Head of caudate nucleus (tissue), 42 donors: ENCODE measurements at regions of chr2 and their contacts with region 1.

Region 1: DNA sequence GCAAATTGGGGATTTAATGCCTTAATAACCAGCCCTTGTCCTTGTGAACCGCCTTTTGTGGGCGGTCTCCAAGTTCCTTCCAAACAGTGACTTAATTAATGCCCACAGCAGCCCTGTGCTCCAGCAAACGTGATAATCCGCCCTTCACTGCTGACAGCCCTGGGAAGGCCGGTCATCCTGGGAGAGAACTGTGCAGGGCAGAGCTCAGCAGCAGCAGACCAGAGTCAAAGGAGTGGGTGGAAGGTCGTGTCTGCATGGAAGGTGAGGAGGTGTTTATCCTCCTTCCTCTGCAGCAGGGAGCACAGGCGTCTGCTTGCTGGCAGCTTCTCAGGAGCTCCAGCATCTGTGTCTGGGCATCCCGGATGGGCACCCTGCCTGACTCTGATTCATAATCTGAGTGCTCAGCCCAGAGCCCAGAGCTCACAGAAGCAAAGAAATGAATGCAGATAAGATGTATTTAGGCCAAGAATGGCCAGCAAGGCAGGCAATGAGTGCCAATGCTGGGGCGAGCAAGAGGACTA is 270.0 kb upstream of the PXDN start:
- DNase-seq: peak; percentile 66 to 96 (median 86)

Region 2: DNA sequence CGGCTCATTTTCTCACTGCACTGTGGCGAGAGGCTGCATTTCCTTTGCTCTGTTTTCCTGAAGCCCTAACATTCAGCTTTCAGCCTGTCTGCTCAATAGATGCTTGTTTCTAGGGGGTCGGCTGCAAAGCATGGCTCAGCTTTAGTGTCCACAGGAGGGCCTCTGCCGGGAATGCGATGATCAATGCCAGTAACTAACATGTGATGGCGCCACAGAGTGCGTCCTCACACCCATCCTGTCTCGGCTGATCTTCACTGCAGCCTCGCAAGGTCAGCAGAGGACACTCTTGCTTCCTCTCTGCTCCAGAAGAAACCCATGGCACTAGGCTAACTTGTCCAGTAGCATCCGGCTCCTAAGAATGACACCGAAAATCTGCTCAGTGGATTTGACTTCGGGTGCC is 113.6 kb before region 1 on chr2:
- intact Hi-C with region 1: loop called (anchors 10 kb)
- DNase-seq: peak in 4 of 42 donors; percentile 22 to 55 (median 49)

Region 3: GRCh38 chr2:2142345-2142744 is 128.0 kb after region 1 on chr2:
- intact Hi-C with region 1: no loop called
- DNase-seq: no peak